ENCODE measurements at regions of chr16 and their contacts with region 1.

Region 1: DNA sequence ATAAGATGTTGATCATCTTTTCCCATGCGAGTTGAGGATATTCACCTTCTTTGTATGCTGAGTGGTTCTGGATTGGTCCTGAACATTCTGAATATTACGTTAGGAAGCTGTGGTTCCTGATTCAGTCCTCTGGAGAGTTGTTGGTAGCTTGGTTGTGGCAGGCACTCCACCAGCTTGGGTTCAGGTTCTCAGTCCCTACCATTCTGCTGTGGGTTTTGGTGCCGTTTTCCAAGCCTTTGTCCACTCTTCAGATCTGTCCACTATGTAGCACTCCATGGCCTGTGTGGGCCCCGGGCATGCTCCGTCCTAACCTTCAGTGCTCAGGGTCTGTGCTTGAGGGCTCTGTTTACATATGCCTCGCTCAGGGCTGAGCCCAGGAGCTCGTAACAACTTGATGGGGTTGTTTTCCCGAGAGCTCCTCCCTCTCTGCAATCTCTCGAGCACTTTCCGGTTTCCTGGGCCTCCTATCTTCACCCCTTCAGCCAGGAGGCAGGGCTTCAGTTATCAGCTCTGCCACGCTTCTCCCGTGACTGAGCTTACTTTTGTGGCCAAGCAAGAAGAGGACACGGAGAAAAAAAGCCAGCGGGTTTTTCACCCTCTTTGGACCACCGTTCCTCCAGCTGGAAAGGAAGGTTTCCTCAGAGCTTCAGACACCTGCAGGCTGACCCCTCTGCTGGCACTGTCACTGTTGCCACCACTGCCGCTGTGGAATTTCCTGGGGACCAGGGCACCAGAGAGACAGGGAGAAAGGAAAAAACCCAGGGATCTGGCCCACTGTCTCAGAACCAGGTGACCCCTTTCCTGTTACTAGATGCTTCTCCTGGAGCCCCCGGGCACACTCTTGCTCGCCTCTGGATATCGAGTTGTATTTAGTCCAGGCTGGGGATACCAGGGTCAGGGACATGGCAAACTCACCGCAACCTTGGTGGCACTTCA is 19.6 kb downstream of the KIAA0513 start:
- DNase-seq: peak; percentile 84 to 98 (median 90)
- ATAC-seq: peak; percentile 91
- H3K4me3 ChIP-seq: peak overlapping the region; percentile 41
- H3K27ac ChIP-seq: peak overlapping the region; percentile 87
- H3K4me1 ChIP-seq: peaks cover 66 to 67% of the 10 kb centered on the region in 2 experiments
- H3K27me3 ChIP-seq: no peaks in the 10 kb centered on the region
- CTCF ChIP-seq: 0 out of 6 replicates have a peak, but pooled peaks of 1 of the 3 experiments have one; percentile 26
- EP300 ChIP-seq: peak; percentile 95
- POLR2A ChIP-seq: peak; percentile 84
- RAD21 ChIP-seq: peak in 1 of 2 experiments; percentile 35; a peak in 1 of 4 replicates

Region 2: DNA sequence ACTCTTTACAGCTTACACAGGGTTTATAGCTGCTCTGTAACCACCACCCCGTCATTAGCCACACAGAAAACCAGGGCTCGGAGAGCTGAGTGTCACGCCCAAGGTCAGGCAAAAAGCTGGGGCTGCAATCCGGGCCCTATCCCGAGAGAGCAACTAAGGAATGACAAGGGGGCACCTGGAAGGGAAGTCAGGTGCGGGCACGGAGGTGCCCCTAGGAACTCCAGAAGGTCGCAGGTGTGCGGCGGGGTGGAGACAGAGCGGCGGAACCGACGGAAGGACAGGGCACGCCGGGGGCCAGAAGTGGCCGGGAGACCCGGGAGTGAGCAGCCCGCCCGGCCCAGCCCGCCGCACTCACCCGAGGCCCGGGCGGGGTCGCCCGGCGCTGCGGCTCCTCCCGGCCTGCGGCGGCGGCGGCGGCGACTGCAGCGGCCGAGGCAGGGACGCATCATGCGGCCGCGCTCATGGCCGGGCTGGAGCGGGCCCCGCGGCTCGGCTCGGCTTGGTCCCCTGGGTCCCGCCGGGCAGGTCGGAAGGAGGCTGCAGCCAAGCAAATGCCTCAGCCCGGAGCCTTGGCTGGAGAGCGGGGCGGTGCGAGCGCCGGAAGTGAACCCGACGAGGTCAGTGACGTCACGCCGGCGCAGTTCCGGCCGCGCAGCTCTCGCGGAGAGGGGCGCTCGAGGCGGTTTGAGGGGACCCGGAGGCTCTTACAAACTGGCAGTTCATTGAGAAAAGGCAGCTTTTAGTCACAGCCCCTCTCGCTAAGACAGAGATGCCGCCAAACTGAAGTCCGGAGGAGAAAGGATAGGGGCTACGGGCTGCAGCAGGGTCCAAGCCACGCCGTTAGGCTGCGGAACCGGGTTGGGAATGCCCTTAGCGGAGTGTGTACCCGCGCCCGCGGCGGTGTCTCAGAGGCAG is 36.0 kb before region 1 on chr16 and contains the start of gene ZDHHC7:
- CTCF ChIA-PET with region 1: no interaction called
- POLR2A ChIA-PET with region 1: interaction called, 11 read pairs
- in situ Hi-C with region 1: no loop called
- intact Hi-C with region 1: no loop called
- DNase-seq: peak; percentile 93 to 95 (median 94)
- ATAC-seq: peak; percentile 92
- H3K4me3 ChIP-seq: peak within 1 kb of the TSS; percentile 97
- H3K27ac ChIP-seq: peak within 1 kb of the TSS; percentile 98
- H3K4me1 ChIP-seq: peaks cover 7 to 18% of the 10 kb centered on the region in 2 experiments
- H3K27me3 ChIP-seq: no peaks in the 10 kb centered on the region
- CTCF ChIP-seq: peak in 2 of 3 experiments; percentile 15 to 35; a peak in 4 of 6 replicates
- EP300 ChIP-seq: peak; percentile 16; the same call in 1 of the 2 replicates
- POLR2A ChIP-seq: peak; percentile 99
- RAD21 ChIP-seq: peak; percentile 9 to 30; a peak in 3 of 4 replicates
- polyA plus RNA-seq, gene ZDHHC7: 1.7 to 1.8 TPM

Region 3: GRCh38 chr16:85027349-85027957 is 19.7 kb before region 1 on chr16 and contains the start of gene KIAA0513:
- CTCF ChIA-PET with region 1: no interaction called
- POLR2A ChIA-PET with region 1: interaction called, 14 read pairs
- in situ Hi-C with region 1: no loop called
- intact Hi-C with region 1: no loop called
- DNase-seq: peak; percentile 98 to 100 (median 100)
- ATAC-seq: peak; percentile 92
- H3K4me3 ChIP-seq: peak within 1 kb of the TSS; percentile 75
- H3K27ac ChIP-seq: peak within 1 kb of the TSS; percentile 57
- H3K4me1 ChIP-seq: peaks cover 33 to 39% of the 10 kb centered on the region in 2 experiments
- H3K27me3 ChIP-seq: no peaks in the 10 kb centered on the region
- CTCF ChIP-seq: peak in 2 of 3 experiments; percentile 48 to 60; a peak in 5 of 6 replicates
- EP300 ChIP-seq: peak; percentile 45
- POLR2A ChIP-seq: peak; percentile 83
- RAD21 ChIP-seq: peak; percentile 38 to 47; a peak in 3 of 4 replicates
- polyA plus RNA-seq, gene KIAA0513: 0.18 to 0.36 TPM

Region 4: DNA sequence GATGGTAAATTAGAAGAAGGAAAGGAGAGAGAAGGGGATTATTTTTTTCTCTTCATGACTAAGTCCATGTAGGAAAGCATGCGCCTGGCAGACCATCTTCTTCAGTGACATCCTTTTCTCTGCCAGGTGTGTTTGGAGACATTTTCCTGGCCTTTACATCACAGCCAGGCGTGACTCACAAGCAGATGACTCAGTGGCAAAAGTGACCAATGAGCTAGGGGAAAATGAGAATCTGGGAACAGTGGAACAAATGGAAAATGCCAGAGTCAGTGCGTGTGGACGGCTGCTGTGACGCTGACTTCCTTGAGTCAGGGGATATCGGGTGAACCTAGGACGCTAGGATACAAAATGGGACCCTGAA is 10.2 kb before region 1 on chr16:
- CTCF ChIA-PET with region 1: no interaction called
- POLR2A ChIA-PET with region 1: interaction called, 11 read pairs
- in situ Hi-C with region 1: no loop called
- intact Hi-C with region 1: no loop called
- DNase-seq: peak in 2 of 4 experiments; percentile 38 to 48
- ATAC-seq: no peak
- H3K4me3 ChIP-seq: no peak overlapping the region
- H3K27ac ChIP-seq: no peak overlapping the region
- H3K4me1 ChIP-seq: peaks cover 6 to 15% of the 10 kb centered on the region in 2 experiments; a peak in 4 of 5 replicates
- H3K27me3 ChIP-seq: no peaks in the 10 kb centered on the region
- CTCF ChIP-seq: no peak
- EP300 ChIP-seq: no peak
- POLR2A ChIP-seq: no peak
- RAD21 ChIP-seq: no peak

Region 5: GRCh38 chr16:85238233-85238647 is 191.0 kb after region 1 on chr16:
- CTCF ChIA-PET with region 1: no interaction called
- POLR2A ChIA-PET with region 1: no interaction called
- in situ Hi-C with region 1: no loop called
- intact Hi-C with region 1: no loop called
- DNase-seq: no peak
- ATAC-seq: 0 out of 3 replicates have a peak, but pooled peaks have one; percentile 20
- H3K4me3 ChIP-seq: no peak overlapping the region
- H3K27ac ChIP-seq: no peak overlapping the region
- H3K4me1 ChIP-seq: peaks cover 0 to 52% of the 10 kb centered on the region in 2 experiments; a peak in 4 of 5 replicates
- H3K27me3 ChIP-seq: no peaks in the 10 kb centered on the region
- CTCF ChIP-seq: no peak
- EP300 ChIP-seq: no peak
- POLR2A ChIP-seq: no peak
- RAD21 ChIP-seq: no peak